A549 (cell line): ENCODE measurements at regions of chr17 and their contacts with region 1.

Region 1: DNA sequence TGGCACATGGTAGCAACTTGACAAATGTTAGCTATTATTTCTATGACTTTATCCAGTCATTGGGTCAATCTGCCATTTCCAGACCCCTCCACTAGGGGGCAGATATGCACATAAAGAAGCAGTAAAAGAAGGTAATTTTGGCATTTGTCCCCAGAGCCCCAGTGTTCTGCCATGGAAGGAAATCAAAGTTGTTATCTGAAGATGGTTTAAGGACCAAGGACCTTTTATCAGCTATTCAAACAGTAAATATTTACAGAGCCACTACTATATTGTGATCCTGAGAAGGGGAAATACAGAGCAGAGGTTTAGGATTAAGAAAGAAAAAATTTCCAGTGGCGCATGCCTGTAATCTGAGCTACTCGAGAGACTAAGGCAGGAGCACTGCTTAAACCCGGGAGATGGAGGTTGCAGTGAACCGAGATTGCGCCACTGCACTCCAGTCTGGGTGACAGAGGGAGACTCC is 20.0 kb downstream of the TRAF4 start:
- DNase-seq: peak; percentile 78 to 81
- ATAC-seq: peak; percentile 51 to 69; a peak in 5 of 6 replicates
- H3K4me3 ChIP-seq: no peak overlapping the region
- H3K27ac ChIP-seq: no peak overlapping the region
- H3K4me1 ChIP-seq: peaks cover 15% of the 10 kb centered on the region
- CTCF ChIP-seq: peak; percentile 97
- EP300 ChIP-seq: no peak
- POLR2A ChIP-seq: no peak
- RAD21 ChIP-seq: peak; percentile 87 to 89

Region 2: GRCh38 chr17:28133562-28133970 is 630.3 kb before region 1 on chr17:
- CTCF ChIA-PET with region 1: no interaction called
- POLR2A ChIA-PET with region 1: no interaction called
- DNase-seq: peak in 1 of 2 experiments; percentile 6
- ATAC-seq: no peak
- H3K4me3 ChIP-seq: no peak overlapping the region
- H3K27ac ChIP-seq: no peak overlapping the region
- H3K4me1 ChIP-seq: 0 out of 3 replicates have a peak, but pooled peaks cover 4% of the 10 kb centered on the region
- CTCF ChIP-seq: no peak
- EP300 ChIP-seq: no peak
- POLR2A ChIP-seq: no peak
- RAD21 ChIP-seq: no peak

Region 3: GRCh38 chr17:28750178-28751047 is 13.4 kb before region 1 on chr17:
- CTCF ChIA-PET with region 1: interaction called, 244 read pairs
- POLR2A ChIA-PET with region 1: no interaction called
- DNase-seq: peak; percentile 82 to 96
- ATAC-seq: peak; percentile 57 to 72
- H3K4me3 ChIP-seq: no peak overlapping the region
- H3K27ac ChIP-seq: peak overlapping the region in 1 of 2 experiments; percentile 10; a peak in 1 of 6 replicates
- H3K4me1 ChIP-seq: peaks cover 50% of the 10 kb centered on the region
- CTCF ChIP-seq: peak; percentile 99
- EP300 ChIP-seq: no peak
- POLR2A ChIP-seq: no peak
- RAD21 ChIP-seq: peak; percentile 87 to 88

Region 4: DNA sequence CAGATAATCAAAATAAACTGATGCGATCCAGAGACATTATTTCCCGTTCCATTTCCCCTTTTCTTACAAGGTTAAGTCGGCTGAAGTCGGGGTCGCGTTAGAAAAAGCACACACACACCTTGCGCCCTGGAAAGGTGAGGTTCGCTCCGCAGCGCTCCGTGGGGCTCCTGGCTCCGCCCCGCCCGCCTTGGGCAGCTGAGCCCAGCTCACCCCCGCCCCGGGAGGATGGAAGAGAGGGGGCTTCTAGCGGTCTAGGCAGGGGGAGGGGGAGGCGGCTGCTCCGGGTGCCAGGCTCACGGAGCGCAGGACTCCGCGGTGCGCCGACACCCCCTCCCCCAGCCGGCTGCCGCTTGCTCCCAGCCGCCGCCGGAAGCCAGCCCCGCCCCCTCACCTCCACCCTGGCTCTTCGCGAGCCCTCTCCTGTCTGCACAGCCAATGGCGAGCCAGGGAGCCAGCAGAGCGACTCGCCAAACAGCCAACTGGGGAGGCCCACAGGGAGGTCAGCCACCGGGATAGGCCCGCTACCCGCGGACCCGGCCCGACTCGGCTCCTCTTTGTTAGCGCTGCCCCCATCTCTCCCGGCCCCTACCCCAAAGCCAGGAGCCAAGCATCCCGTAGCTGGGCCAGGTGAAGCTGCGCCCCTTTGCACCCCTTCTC is 48.4 kb after region 1 on chr17:
- CTCF ChIA-PET with region 1: interaction called, 99 read pairs
- POLR2A ChIA-PET with region 1: interaction called, 10 read pairs
- DNase-seq: peak; percentile 97 to 100
- ATAC-seq: peak; percentile 97 to 98
- H3K4me3 ChIP-seq: peak overlapping the region; percentile 73
- H3K27ac ChIP-seq: peak overlapping the region; percentile 89 to 94
- H3K4me1 ChIP-seq: peaks cover 46% of the 10 kb centered on the region
- CTCF ChIP-seq: no peak
- EP300 ChIP-seq: no peak
- POLR2A ChIP-seq: peak; percentile 54
- RAD21 ChIP-seq: no peak

Region 5: GRCh38 chr17:28849281-28849680 is 85.4 kb after region 1 on chr17:
- CTCF ChIA-PET with region 1: interaction called, 58 read pairs
- POLR2A ChIA-PET with region 1: no interaction called
- DNase-seq: peak in 1 of 2 experiments; percentile 49
- ATAC-seq: peak; percentile 71 to 72; a peak in 5 of 6 replicates
- H3K4me3 ChIP-seq: no peak overlapping the region
- H3K27ac ChIP-seq: no peak overlapping the region
- H3K4me1 ChIP-seq: 0 out of 3 replicates have a peak, but pooled peaks cover 2% of the 10 kb centered on the region
- CTCF ChIP-seq: no peak
- EP300 ChIP-seq: no peak
- POLR2A ChIP-seq: no peak
- RAD21 ChIP-seq: 0 out of 5 replicates have a peak, but pooled peaks of 1 of the 2 experiments have one; percentile 7

Region 6: DNA sequence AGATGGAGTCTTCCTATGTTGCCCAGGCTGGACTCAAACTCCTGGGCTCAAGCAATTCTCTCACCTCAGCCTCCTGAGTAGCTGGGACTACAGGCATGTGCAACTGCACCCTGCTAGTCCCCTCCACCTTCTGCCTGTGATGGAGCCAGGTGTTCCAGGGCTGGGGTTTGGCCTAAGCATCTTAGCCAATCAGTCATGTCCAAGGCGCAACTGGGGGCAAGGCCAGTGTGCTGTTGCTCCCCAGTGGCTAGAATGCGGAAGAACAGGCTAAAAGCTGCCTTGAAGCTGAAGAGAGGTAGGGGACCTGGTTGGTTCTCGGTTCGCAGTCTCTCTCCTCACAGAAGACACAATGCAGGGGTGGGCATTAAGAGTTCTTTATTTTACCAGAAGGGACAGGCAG is 115.1 kb after region 1 on chr17:
- CTCF ChIA-PET with region 1: interaction called, 82 read pairs
- POLR2A ChIA-PET with region 1: no interaction called
- DNase-seq: peak; percentile 81 to 90
- ATAC-seq: peak; percentile 77 to 96
- H3K4me3 ChIP-seq: no peak overlapping the region
- H3K27ac ChIP-seq: no peak overlapping the region
- H3K4me1 ChIP-seq: no peaks in the 10 kb centered on the region
- CTCF ChIP-seq: peak; percentile 48
- EP300 ChIP-seq: no peak
- POLR2A ChIP-seq: no peak
- RAD21 ChIP-seq: peak; percentile 67 to 88

Region 7: GRCh38 chr17:28946239-28946638 is 182.4 kb after region 1 on chr17:
- CTCF ChIA-PET with region 1: interaction called, 17 read pairs
- POLR2A ChIA-PET with region 1: interaction called, 11 read pairs
- DNase-seq: no peak
- ATAC-seq: no peak
- H3K4me3 ChIP-seq: no peak overlapping the region
- H3K27ac ChIP-seq: no peak overlapping the region
- H3K4me1 ChIP-seq: peaks cover 20% of the 10 kb centered on the region
- CTCF ChIP-seq: no peak
- EP300 ChIP-seq: no peak
- POLR2A ChIP-seq: no peak
- RAD21 ChIP-seq: no peak